SK-N-SH (cell line): ENCODE measurements at regions of chr14 and their contacts with region 1.

Region 1: DNA sequence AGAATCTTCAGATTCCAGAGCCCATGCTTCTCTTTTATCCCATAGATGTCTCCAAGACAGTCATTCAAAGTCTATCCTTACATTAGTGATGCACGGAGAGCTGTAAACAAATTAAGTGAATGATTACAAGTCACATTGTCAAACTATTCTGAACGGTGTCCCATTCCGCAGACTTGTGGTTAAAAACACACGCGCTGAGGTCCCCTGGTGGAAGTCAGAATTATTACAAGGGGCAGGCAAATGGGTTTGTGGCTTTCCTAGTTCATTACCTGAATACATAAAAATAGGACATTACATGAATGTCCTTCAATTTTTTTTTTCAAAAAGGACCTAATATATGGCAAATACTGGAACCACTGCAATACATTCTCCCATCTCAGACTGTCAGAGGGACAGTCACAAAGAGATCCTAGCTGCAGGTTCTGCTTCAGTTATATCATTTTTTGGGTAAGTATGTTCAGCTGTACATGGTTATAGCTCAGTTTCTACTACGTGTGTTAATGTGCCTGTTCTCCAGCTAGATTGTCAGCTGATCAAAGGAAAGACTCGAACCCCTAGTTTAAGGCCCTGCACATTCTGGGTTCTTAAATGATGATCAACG is 53.1 kb upstream of the STON2 start:
- DNase-seq: peak; percentile 65
- H3K4me3 ChIP-seq: peak overlapping the region in 1 of 2 experiments; percentile 21; a peak in 1 of 4 replicates
- H3K27ac ChIP-seq: no peak overlapping the region
- H3K4me1 ChIP-seq: peaks cover 0 to 4% of the 10 kb centered on the region in 2 experiments; a peak in 1 of 4 replicates
- H3K27me3 ChIP-seq: no peaks in the 10 kb centered on the region; the same call in 1 of the 2 replicates
- CTCF ChIP-seq: peak; percentile 79
- EP300 ChIP-seq: no peak
- RAD21 ChIP-seq: peak; percentile 87

Region 2: GRCh38 chr14:81261176-81261575 is 192.1 kb before region 1 on chr14:
- CTCF ChIA-PET with region 1: interaction called, 321 read pairs
- POLR2A ChIA-PET with region 1: no interaction called
- DNase-seq: no peak
- H3K4me3 ChIP-seq: no peak overlapping the region
- H3K27ac ChIP-seq: no peak overlapping the region
- H3K4me1 ChIP-seq: no peaks in the 10 kb centered on the region
- H3K27me3 ChIP-seq: no peaks in the 10 kb centered on the region
- CTCF ChIP-seq: no peak
- EP300 ChIP-seq: no peak
- RAD21 ChIP-seq: no peak

Region 3: DNA sequence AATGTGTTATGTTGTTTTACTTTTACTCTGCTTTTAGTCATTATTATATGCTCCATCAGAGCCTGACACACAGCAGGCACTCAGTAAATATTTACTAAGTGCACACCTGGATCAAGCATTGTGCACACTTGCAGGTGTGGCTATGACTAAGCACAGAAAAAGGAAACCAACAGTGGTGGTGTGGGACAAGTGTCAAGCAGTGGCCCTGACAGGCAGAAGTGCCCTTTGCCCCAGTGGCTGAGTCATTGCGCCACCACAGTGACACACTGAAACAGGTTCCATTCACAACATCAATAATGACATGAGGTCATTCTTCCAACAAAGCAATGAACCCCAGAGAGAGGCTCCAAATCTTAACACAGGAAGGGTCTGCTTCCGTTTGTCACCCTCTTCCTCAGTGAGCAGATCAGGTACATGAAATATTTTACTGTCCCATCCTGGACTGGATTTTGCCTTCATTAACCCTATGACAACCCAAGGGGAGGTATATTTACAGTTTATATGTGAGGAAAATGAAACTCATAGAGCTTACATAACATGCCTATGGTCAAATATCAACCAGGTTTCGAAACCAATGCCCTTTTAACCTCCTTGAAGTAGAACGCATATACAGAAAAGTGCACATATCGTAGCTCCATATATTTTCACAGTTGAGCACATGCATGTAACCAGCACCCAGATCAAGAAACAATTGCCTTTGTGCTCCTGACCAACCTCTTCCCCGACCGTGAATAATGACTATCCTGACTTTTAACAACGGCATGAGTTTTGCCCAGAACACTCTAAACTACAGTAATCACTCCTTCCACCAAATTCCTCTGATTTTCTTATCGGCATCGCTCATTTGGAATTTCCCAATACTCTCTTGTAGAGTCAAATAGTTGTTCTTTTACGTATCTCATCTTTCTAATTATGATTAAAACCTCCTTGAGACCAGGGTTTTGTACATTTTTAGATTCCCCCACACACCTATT is 149.7 kb before region 1 on chr14:
- CTCF ChIA-PET with region 1: interaction called, 11 read pairs
- POLR2A ChIA-PET with region 1: no interaction called
- DNase-seq: no peak
- H3K4me3 ChIP-seq: no peak overlapping the region
- H3K27ac ChIP-seq: no peak overlapping the region
- H3K4me1 ChIP-seq: no peaks in the 10 kb centered on the region
- H3K27me3 ChIP-seq: no peaks in the 10 kb centered on the region
- CTCF ChIP-seq: no peak
- EP300 ChIP-seq: no peak
- RAD21 ChIP-seq: no peak

Region 4: DNA sequence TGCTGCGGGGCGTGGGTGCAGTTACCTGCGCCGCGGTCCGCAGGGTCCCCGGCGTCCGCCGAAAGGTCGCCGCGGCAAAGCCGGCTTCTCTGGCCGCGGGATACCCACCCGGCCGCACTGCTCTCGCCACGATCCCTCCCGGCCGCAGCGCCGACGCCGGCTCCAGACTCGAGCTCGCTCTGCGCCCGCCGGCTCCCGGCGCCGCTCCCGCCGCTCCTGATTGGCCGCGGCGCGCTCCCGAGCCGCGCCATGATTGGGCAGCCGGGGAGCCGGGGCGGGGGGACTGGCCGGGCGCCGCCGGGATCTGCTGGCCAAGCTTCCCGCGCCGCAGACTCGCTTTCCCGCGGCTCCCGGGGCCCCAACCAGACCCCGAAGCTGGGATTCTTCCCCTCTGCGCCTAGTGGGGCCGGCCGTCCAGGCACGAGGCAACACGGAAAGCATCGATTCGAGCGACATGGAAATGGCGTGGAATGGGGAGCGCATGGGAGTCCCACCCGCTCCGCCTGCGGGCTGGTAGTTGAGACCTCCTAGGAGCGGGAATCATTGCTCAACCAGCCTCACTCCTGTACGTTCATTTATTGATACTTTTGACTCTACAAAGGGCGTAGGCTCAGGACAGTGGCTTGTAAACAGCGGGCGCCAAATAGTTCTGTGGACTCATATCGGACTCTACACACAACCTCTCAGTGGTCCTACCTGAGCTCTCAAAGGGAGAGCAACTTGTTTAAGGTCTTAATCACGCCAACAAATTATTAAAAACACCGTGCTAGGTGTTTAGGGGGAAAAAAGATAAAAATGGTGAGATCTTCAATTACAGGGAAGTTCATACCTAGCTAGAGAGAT is 16.7 kb before region 1 on chr14:
- CTCF ChIA-PET with region 1: interaction called, 32 read pairs
- POLR2A ChIA-PET with region 1: no interaction called
- DNase-seq: peak; percentile 97
- H3K4me3 ChIP-seq: peak overlapping the region; percentile 56 to 60
- H3K27ac ChIP-seq: no peak overlapping the region; a peak in 1 of 4 replicates
- H3K4me1 ChIP-seq: peaks cover 0 to 8% of the 10 kb centered on the region in 2 experiments; a peak in 1 of 4 replicates
- H3K27me3 ChIP-seq: peaks cover 32% of the 10 kb centered on the region
- CTCF ChIP-seq: no peak
- EP300 ChIP-seq: no peak
- RAD21 ChIP-seq: no peak

Region 5: GRCh38 chr14:81464247-81465002 is 11.2 kb after region 1 on chr14:
- CTCF ChIA-PET with region 1: interaction called, 106 read pairs
- POLR2A ChIA-PET with region 1: no interaction called
- DNase-seq: peak; percentile 66
- H3K4me3 ChIP-seq: peak overlapping the region; percentile 43 to 74
- H3K27ac ChIP-seq: no peak overlapping the region
- H3K4me1 ChIP-seq: no peaks in the 10 kb centered on the region
- H3K27me3 ChIP-seq: no peaks in the 10 kb centered on the region
- CTCF ChIP-seq: peak; percentile 90
- EP300 ChIP-seq: no peak
- RAD21 ChIP-seq: peak; percentile 84

Region 6: GRCh38 chr14:81550001-81550637 is 96.9 kb after region 1 on chr14:
- CTCF ChIA-PET with region 1: no interaction called
- POLR2A ChIA-PET with region 1: no interaction called
- DNase-seq: no peak
- H3K4me3 ChIP-seq: no peak overlapping the region
- H3K27ac ChIP-seq: no peak overlapping the region
- H3K4me1 ChIP-seq: no peaks in the 10 kb centered on the region
- H3K27me3 ChIP-seq: no peaks in the 10 kb centered on the region
- CTCF ChIP-seq: no peak
- EP300 ChIP-seq: no peak
- RAD21 ChIP-seq: no peak